Cardiac septum (tissue), 1 donor: ENCODE measurements at regions of chr2 and their contacts with region 1.

Region 1: DNA sequence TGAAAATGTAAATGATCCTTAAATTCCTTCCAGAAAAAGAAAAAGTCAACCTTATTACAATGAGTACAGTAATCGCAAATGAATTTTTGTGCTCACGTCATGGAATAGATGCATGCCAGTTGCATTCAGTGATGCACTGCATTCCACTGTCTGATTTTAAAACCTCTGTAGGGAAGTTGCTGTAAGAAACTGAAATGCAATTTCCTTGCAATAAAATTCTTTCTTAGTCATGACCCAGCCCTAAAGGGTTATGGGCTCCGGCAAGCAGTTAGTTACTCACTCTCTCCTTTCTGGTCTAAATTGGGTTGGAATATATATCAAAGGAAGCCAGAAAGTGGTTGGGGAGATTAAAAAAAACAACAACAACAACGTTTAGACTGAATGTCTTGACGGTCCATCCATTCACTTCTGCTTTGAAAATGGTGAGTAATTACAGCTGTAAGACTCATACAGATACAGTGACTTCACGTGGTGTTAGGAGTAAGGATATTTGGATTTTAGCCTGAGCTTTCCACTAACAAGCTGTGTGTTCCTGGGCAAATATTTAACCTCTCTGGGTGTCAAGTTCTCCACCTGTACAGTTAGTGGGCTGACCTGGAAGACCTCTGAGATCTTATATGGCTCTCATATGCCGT is 8.6 kb upstream of the RND3 start:
- DNase-seq: no peak

Region 2: DNA sequence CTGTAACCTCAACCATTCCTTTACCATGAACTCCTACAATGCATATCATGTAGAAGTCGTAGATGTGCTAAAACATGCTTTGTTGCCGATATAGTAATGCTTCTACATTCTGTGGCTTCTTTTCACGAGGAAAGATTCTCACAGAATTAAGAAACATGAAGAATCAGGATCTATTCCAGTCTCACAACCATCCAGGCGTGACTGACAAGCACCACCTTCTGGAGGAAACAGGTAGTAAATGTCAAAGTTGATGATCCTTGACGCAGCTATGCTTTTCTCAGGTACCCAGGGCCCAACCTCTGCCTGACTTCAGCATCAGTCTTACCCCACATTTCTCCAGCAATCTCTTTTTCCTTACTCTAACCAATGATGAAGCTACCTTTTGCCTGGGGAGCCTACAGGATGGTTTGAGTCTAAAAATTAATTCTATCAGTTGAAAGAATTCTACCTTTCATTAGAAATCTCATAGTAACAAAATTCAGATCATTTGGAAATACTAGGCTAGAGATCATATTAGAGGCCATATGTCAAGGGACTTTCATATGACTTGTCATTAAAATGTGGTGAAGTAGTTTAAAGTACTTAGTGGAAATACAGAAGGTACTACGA is 114.7 kb after region 1 on chr2:
- intact Hi-C with region 1: loop called (anchors 10 kb)
- DNase-seq: no peak